Mammary epithelial cell (primary cell): ENCODE measurements at regions of chr11 and their contacts with region 1.

Region 1: GRCh38 chr11:335779-336658 is 15.4 kb upstream of the IFITM3 start:
- DNase-seq: no peak
- H3K4me3 ChIP-seq: no peak overlapping the region
- H3K27ac ChIP-seq: no peak overlapping the region
- H3K4me1 ChIP-seq: no peaks in the 10 kb centered on the region
- H3K27me3 ChIP-seq: no peaks in the 10 kb centered on the region
- CTCF ChIP-seq: no peak

Region 2: GRCh38 chr11:250740-251299 is 85.2 kb before region 1 on chr11:
- CTCF ChIA-PET with region 1: no interaction called
- dilution Hi-C with region 1: loop called (anchors 10 kb)
- in situ Hi-C with region 1: no loop called
- intact Hi-C with region 1: no loop called
- DNase-seq: peak; percentile 11
- H3K4me3 ChIP-seq: no peak overlapping the region
- H3K27ac ChIP-seq: no peak overlapping the region
- H3K4me1 ChIP-seq: no peaks in the 10 kb centered on the region
- H3K27me3 ChIP-seq: no peaks in the 10 kb centered on the region
- CTCF ChIP-seq: peak; percentile 56 to 62

Region 3: GRCh38 chr11:379205-380094 is 43.4 kb after region 1 on chr11:
- CTCF ChIA-PET with region 1: no interaction called
- dilution Hi-C with region 1: loop called (anchors 5 kb)
- in situ Hi-C with region 1: no loop called
- intact Hi-C with region 1: no loop called
- DNase-seq: no peak
- H3K4me3 ChIP-seq: no peak overlapping the region
- H3K27ac ChIP-seq: no peak overlapping the region
- H3K4me1 ChIP-seq: no peaks in the 10 kb centered on the region
- H3K27me3 ChIP-seq: no peaks in the 10 kb centered on the region
- CTCF ChIP-seq: no peak

Region 4: GRCh38 chr11:406978-407739 is 71.1 kb after region 1 on chr11:
- CTCF ChIA-PET with region 1: no interaction called
- dilution Hi-C with region 1: no loop called
- in situ Hi-C with region 1: no loop called
- intact Hi-C with region 1: no loop called
- DNase-seq: peak; percentile 81
- H3K4me3 ChIP-seq: no peak overlapping the region
- H3K27ac ChIP-seq: no peak overlapping the region
- H3K4me1 ChIP-seq: peaks cover 11% of the 10 kb centered on the region
- H3K27me3 ChIP-seq: no peaks in the 10 kb centered on the region
- CTCF ChIP-seq: no peak

Region 5: GRCh38 chr11:439315-440064 is 103.5 kb after region 1 on chr11:
- CTCF ChIA-PET with region 1: no interaction called
- dilution Hi-C with region 1: loop called (anchors 5 kb)
- in situ Hi-C with region 1: no loop called
- intact Hi-C with region 1: no loop called
- DNase-seq: no peak
- H3K4me3 ChIP-seq: no peak overlapping the region
- H3K27ac ChIP-seq: no peak overlapping the region
- H3K4me1 ChIP-seq: peaks cover 21% of the 10 kb centered on the region
- H3K27me3 ChIP-seq: no peaks in the 10 kb centered on the region
- CTCF ChIP-seq: no peak